Activated CD4-positive, alpha-beta T cell treated with anti-CD3 and anti-CD28 coated beads for 36 hours (primary cell): ENCODE measurements at regions of chr10 and their contacts with region 1.

Region 1: DNA sequence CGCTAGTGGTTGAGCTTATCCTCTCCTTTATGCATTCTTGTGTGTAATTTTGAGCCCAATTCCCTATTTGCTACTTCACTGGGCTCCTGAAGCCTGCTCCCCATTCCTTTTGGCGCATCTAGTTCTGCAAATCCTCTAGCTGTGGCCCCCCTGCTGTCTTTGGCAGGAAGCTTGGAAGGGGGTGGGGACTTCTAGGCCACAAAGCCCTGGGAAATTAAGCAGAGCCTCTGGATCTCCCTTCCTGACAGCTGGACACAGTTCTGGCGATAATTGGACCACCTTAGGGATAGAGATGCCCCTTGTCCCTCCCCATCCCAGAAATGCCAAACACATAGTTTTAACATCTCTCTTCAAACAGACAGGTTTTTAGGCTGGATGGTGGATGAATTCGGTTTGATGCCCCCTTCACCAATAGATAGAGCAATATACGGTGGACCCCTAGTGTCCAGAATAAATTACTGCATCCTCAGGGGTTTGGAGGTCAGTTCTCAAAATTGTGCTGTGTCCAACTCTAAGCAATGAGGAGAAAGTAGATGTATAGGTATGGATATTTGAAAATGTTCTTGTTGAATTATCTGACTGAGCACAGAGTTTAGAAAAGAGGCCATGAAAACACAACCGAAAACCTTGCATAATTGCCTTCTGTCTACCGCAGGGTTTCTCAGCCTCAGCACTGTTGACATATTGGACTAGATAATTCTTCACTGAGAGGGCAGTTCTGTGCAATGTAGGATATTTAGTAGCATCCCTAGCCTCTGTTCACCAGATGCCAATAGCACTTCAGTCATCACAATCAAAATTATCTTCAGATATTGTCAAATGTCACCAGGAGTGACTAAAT is 75.5 kb downstream of the PAPSS2 start:
- DNase-seq: no peak
- ATAC-seq: peak; percentile 68
- H3K4me3 Mint-ChIP-seq: no peak overlapping the region
- H3K27ac Mint-ChIP-seq: no peak overlapping the region
- H3K4me1 Mint-ChIP-seq: no peaks in the 10 kb centered on the region
- H3K27me3 Mint-ChIP-seq: peaks cover 17% of the 10 kb centered on the region

Region 2: DNA sequence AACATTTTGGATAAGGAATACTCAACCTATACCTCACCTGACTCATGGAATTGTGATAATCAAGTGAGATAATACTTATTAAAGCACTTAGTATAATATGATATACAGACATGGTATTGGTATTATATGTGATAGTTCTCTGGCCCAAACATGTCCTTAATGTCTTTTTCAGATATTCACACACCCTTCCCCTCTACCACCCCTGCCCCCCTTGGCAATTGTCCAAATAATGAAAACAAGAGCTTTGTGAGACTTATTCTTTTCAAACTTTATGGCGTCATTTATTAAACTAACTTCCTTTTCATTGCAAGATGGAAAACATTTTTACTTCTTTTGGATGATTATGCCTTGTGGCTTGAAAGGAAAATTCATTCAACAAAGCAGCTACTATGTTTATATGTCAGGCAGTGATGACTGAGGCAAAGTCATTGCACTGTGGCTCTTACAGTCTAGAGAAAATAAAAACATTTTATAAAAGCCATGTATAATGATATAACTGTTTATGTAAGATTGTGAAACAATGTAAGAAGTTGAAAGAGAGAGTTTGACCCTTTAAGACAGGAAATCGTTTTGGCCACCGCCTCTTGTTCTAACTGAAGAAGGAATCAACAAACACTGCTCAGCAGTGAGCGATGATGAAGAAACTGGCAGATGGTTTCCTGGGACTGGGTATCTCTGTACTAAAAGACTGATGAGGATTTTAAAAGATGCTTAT is 203.1 kb before region 1 on chr10:
- CTCF ChIA-PET with region 1: interaction called, 4 read pairs
- POLR2A ChIA-PET with region 1: no interaction called
- intact Hi-C with region 1: loop called (anchors 1 kb)
- DNase-seq: no peak
- ATAC-seq: no peak
- H3K4me3 Mint-ChIP-seq: no peak overlapping the region
- H3K27ac Mint-ChIP-seq: no peak overlapping the region
- H3K4me1 Mint-ChIP-seq: peaks cover 12% of the 10 kb centered on the region
- H3K27me3 Mint-ChIP-seq: no peaks in the 10 kb centered on the region

Region 3: GRCh38 chr10:87659571-87660483 is 75.4 kb before region 1 on chr10 and contains the start of gene PAPSS2:
- CTCF ChIA-PET with region 1: interaction called, 7 read pairs
- POLR2A ChIA-PET with region 1: no interaction called
- intact Hi-C with region 1: loop called (anchors 1 kb)
- DNase-seq: peak; percentile 56
- ATAC-seq: peak; percentile 24
- H3K4me3 Mint-ChIP-seq: peak within 1 kb of the TSS; percentile 65
- H3K27ac Mint-ChIP-seq: no peak within 1 kb of the TSS
- H3K4me1 Mint-ChIP-seq: peaks cover 8% of the 10 kb centered on the region
- H3K27me3 Mint-ChIP-seq: peaks cover 38% of the 10 kb centered on the region
- total RNA-seq, gene PAPSS2: 0.05 to 0.30 TPM

Region 4: DNA sequence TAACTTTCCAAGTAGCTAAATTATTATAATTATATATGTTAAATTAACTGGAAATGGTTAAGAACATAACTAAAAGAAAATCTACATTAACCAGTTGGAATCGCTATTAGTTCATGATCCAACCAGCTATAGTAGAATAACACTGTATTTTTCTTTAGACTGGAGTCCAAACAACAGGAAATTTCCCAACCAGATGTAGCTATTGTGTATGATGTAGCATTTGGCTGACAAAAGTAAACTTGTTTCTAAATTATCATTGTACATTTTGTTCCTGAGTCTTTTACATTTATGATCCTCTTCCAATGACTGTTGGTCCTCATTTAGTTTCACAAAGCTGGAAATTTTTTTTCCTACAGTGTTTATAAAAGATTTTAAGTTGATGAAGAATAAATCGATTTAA is 13.4 kb before region 1 on chr10:
- CTCF ChIA-PET with region 1: interaction called, 15 read pairs
- POLR2A ChIA-PET with region 1: no interaction called
- intact Hi-C with region 1: no loop called
- DNase-seq: no peak
- ATAC-seq: no peak
- H3K4me3 Mint-ChIP-seq: no peak overlapping the region
- H3K27ac Mint-ChIP-seq: no peak overlapping the region
- H3K4me1 Mint-ChIP-seq: peaks cover 7% of the 10 kb centered on the region
- H3K27me3 Mint-ChIP-seq: peaks cover 11% of the 10 kb centered on the region